ENCODE measurements at regions of chr5 and their contacts with region 1.

Region 1: GRCh38 chr5:122156724-122157325 is 27.5 kb downstream of the ZNF474 start:
- DNase-seq: no peak
- H3K4me3 ChIP-seq: no peak overlapping the region
- H3K27ac ChIP-seq: no peak overlapping the region
- H3K4me1 ChIP-seq: no peaks in the 10 kb centered on the region
- H3K27me3 ChIP-seq: no peaks in the 10 kb centered on the region
- CTCF ChIP-seq: no peak

Region 2: DNA sequence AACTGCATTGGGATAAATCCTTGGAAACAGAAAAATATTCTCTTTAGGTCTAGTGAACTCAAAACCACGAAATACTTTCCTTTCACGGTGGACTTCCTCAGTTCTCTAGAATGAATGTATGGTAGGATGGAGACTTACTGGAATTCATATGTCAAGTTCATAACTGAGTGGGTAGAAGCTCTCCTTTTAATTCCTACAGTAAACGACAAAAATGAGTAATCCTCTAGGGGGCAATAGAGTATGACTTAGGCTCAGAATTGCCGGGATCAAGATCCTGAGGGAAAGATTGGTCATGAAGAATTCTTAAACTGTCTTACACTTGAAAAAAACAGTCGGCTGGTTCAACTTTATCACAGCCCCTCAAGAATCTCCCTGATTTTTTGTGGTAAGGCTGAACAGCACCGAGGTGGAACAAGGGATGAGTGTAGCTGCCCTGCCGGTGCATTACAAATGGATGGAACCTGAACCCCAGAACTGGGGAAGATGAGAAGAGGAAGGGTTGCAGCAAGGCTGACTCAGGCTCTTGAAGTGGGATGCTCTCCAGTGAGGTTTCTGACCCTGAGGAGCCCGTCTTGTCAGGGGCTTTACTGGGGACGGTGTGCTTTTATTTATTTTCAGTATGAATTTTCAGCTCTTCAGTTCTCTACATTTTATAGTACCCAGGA is 64.8 kb before region 1 on chr5:
- intact Hi-C with region 1: loop called (anchors 10 kb)
- DNase-seq: no peak
- H3K4me3 ChIP-seq: no peak overlapping the region
- H3K27ac ChIP-seq: no peak overlapping the region
- H3K4me1 ChIP-seq: no peaks in the 10 kb centered on the region
- H3K27me3 ChIP-seq: no peaks in the 10 kb centered on the region
- CTCF ChIP-seq: no peak